ENCODE measurements at regions of chr6 and their contacts with region 1.

Region 1: GRCh38 chr6:79335133-79335674 is 100.7 kb upstream of the HMGN3 start:
- DNase-seq: no peak
- ATAC-seq: no peak
- H3K4me3 ChIP-seq: no peak overlapping the region
- H3K27ac ChIP-seq: no peak overlapping the region
- H3K4me1 ChIP-seq: no peaks in the 10 kb centered on the region
- H3K27me3 ChIP-seq: no peaks in the 10 kb centered on the region

Region 2: DNA sequence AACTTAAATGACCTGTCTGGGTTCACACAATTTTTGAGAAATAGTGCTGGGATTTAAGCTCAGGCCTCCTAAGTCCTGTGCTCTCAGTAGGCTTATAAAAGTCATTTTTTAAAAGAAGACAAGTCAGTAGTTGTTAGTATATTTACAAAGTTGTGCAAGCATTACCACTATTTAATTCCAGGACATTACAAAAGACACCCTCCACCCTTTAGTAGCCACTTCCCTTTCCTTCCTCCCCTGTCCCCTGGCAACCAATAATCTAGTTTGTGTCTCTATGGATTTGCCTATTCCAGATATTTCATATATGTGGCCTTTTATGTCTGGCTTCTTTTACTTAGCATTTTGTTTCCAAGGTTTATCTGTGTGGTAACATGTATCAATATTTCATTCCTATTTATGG is 138.3 kb before region 1 on chr6:
- intact Hi-C with region 1: loop called in 1 of 2 experiments (anchors 10 kb)
- DNase-seq: no peak
- ATAC-seq: no peak
- H3K4me3 ChIP-seq: no peak overlapping the region
- H3K27ac ChIP-seq: no peak overlapping the region
- H3K4me1 ChIP-seq: no peaks in the 10 kb centered on the region
- H3K27me3 ChIP-seq: no peaks in the 10 kb centered on the region

Measured in aorta (tissue), 5 donors.